Right ventricle myocardium inferior (tissue), 1 donor: ENCODE measurements at regions of chr7 and their contacts with region 1.

Region 1: GRCh38 chr7:6637544-6638229 is 569 bp downstream of the ZNF316 start:
- DNase-seq: no peak
- ATAC-seq: peak; percentile 23

Region 2: GRCh38 chr7:6691609-6692106 is 54.0 kb after region 1 on chr7:
- intact Hi-C with region 1: no loop called
- DNase-seq: no peak
- ATAC-seq: no peak

Region 3: GRCh38 chr7:6706677-6707544 is 69.2 kb after region 1 on chr7 and contains the start of gene ZNF12:
- intact Hi-C with region 1: loop called (anchors 10 kb)
- DNase-seq: peak; percentile 99
- ATAC-seq: peak; percentile 100
- total RNA-seq, gene ZNF12: 13.2 TPM